ENCODE measurements at regions of chr9 and their contacts with region 1.

Region 1: GRCh38 chr9:136991993-136992818 is at the start of gene PAXX:
- DNase-seq: peak; percentile 91 to 95 (median 92)
- H3K4me3 ChIP-seq: peak within 1 kb of the TSS; percentile 65
- H3K4me3 Mint-ChIP-seq: peak within 1 kb of the TSS; percentile 84 to 95 (median 87)
- H3K27ac ChIP-seq: peak within 1 kb of the TSS; percentile 83
- H3K27ac Mint-ChIP-seq: peak within 1 kb of the TSS; percentile 92 to 98 (median 96)
- H3K4me1 ChIP-seq: peaks cover 28% of the 10 kb centered on the region
- H3K4me1 Mint-ChIP-seq: peaks cover 19 to 50% (median 22%) of the 10 kb centered on the region in 3 donors
- H3K27me3 ChIP-seq: no peaks in the 10 kb centered on the region
- H3K27me3 Mint-ChIP-seq: peaks cover 2 to 3% of the 10 kb centered on the region in 2 donors
- total RNA-seq, gene PAXX: 78.4 to 82.2 TPM

Region 2: DNA sequence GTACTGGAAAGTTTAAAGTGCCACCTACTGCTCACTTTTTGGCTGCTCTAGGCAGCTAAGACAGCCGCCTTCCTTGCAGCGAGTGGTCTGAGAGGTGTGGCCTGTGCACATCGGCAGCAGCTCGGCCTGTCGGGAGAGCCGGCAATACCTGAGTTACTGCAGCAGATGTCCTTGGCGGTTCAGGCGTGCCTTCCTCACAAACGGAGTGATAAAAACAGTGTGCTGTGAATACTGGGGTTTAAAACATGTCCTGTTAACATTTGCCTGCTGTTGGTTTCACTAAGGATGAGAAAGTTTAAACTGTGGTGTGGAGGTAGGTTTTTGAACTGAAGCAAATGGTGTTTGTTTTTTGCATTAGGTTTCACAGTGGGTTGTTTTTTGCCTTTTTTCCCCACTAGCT is 93.0 kb before region 1 on chr9:
- CTCF ChIA-PET with region 1: no interaction called
- POLR2A ChIA-PET with region 1: no interaction called
- DNase-seq: no peak
- H3K4me3 ChIP-seq: no peak overlapping the region
- H3K4me3 Mint-ChIP-seq: no peak overlapping the region
- H3K27ac ChIP-seq: no peak overlapping the region
- H3K27ac Mint-ChIP-seq: peak overlapping the region in 6 of 8 donors; percentile 50 to 99 (median 74)
- H3K4me1 ChIP-seq: peaks cover 30% of the 10 kb centered on the region
- H3K4me1 Mint-ChIP-seq: peaks cover 38 to 57% (median 41%) of the 10 kb centered on the region in 3 donors
- H3K27me3 ChIP-seq: no peaks in the 10 kb centered on the region
- H3K27me3 Mint-ChIP-seq: no peaks in the 10 kb centered on the region

Region 3: DNA sequence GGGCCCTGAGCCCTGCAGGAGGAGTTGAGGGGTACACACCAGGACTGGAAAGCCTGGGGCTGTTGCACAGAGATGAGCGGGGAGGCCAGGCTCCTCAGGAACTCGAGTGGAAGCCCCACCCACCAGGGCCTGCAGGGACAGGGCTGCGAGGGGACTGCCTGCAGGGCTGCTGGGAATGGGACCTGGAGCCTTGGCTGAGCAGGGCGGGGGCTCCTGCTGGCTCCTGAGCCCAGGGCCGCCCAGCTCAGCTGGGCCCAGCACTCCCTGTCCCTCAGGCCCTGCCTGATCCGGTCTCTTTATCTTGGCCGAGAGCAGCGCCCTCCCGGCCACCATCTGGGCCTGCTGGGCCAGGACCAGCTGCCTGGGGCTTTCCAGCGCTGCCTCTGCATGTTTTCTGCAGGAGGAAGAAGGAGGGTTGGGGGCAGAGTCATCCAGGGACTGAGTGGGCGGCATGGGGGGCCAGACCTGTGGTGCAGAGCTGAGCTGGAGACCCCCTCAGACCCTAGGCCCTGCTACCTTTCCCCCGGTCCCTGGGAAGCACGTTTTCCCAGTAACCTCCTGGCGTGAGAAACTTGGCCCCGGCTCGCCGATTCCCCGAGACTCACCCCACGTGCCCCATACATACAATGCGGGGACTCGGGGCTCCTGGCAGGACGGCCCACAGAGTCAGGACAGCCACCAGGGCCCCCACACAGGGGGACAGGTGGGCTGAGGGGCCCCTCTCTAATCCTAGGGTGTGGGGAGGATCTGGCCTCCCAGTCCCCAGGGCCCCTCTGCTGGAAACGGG is 30.7 kb before region 1 on chr9:
- CTCF ChIA-PET with region 1: interaction called, 7 read pairs
- POLR2A ChIA-PET with region 1: interaction called, 11 read pairs
- DNase-seq: no peak
- H3K4me3 ChIP-seq: no peak overlapping the region
- H3K4me3 Mint-ChIP-seq: peak overlapping the region in 3 of 7 donors; percentile 72 to 86 (median 78)
- H3K27ac ChIP-seq: no peak overlapping the region
- H3K27ac Mint-ChIP-seq: peak overlapping the region in 5 of 8 donors; percentile 29 to 93 (median 69)
- H3K4me1 ChIP-seq: peaks cover 52% of the 10 kb centered on the region
- H3K4me1 Mint-ChIP-seq: peaks cover 44 to 86% (median 48%) of the 10 kb centered on the region in 3 donors
- H3K27me3 ChIP-seq: no peaks in the 10 kb centered on the region
- H3K27me3 Mint-ChIP-seq: peaks cover 0 to 3% of the 10 kb centered on the region in 2 donors